Right ventricle myocardium inferior (tissue), 1 donor: ENCODE measurements at regions of chr6 and their contacts with region 1.

Region 1: DNA sequence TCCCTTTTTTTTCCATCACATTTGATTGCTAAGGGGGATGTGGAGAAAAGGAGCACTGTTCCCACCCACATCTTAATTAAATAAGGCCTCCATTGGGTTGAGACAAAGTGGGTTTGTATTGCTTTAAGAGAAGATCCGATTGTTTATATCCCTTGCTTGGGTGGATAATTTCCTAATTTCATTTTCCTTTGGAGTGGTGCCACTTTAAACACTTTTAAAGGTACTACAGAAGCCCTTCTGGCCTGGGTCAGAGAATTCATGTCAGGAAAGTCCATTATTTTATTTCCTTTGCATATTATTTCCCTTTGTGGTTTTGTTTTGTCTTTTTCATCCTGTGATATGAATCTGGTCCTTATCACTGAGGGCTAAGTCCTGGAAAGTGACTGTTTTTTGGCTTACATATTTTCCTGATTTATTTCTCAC is 56.9 kb downstream of the PHACTR2 start:
- DNase-seq: no peak
- ATAC-seq: peak; percentile 37

Region 2: GRCh38 chr6:143598466-143599080 is 136.1 kb before region 1 on chr6:
- intact Hi-C with region 1: loop called (anchors 5 kb)
- DNase-seq: no peak
- ATAC-seq: no peak

Region 3: GRCh38 chr6:143802833-143803565 is 68.3 kb after region 1 on chr6:
- intact Hi-C with region 1: no loop called
- DNase-seq: no peak
- ATAC-seq: no peak